ENCODE measurements at regions of chr13 and their contacts with region 1.

Region 1: GRCh38 chr13:35643625-35644024 is 167.1 kb upstream of the MAB21L1 start:
- DNase-seq: no peak
- H3K4me3 ChIP-seq: no peak overlapping the region
- H3K27ac ChIP-seq: no peak overlapping the region
- H3K4me1 ChIP-seq: no peaks in the 10 kb centered on the region
- H3K27me3 ChIP-seq: no peaks in the 10 kb centered on the region
- CTCF ChIP-seq: no peak

Region 2: GRCh38 chr13:35573639-35574038 is 70.0 kb before region 1 on chr13:
- CTCF ChIA-PET with region 1: no interaction called
- POLR2A ChIA-PET with region 1: no interaction called
- intact Hi-C with region 1: no loop called
- DNase-seq: no peak
- H3K4me3 ChIP-seq: no peak overlapping the region
- H3K27ac ChIP-seq: no peak overlapping the region
- H3K4me1 ChIP-seq: no peaks in the 10 kb centered on the region
- H3K27me3 ChIP-seq: no peaks in the 10 kb centered on the region
- CTCF ChIP-seq: no peak

Region 3: DNA sequence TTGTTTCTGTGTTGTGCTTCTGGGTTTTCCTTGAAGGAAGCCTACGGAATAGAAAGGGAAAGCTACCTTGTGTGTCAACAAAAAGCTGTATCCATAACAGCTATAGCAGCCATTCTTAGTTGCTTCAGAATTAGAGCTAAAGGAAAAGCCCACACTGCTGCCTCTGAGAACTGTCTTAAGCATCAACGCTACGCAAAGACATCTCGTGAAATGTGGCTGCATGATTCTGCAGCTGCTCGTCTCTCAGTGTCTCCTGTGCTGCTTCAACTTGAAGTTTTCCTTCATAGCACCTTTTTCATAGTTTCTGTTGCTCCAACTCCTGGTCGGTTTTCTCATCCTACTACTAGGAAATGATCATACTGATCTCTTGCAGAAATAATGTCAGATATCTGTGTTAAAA is 26.2 kb before region 1 on chr13:
- CTCF ChIA-PET with region 1: no interaction called
- POLR2A ChIA-PET with region 1: no interaction called
- intact Hi-C with region 1: no loop called
- DNase-seq: no peak
- H3K4me3 ChIP-seq: no peak overlapping the region
- H3K27ac ChIP-seq: no peak overlapping the region
- H3K4me1 ChIP-seq: no peaks in the 10 kb centered on the region
- H3K27me3 ChIP-seq: no peaks in the 10 kb centered on the region
- CTCF ChIP-seq: no peak

Region 4: GRCh38 chr13:35630551-35631275 is 12.9 kb before region 1 on chr13:
- CTCF ChIA-PET with region 1: interaction called, 14 read pairs
- POLR2A ChIA-PET with region 1: no interaction called
- intact Hi-C with region 1: no loop called
- DNase-seq: peak in 1 of 2 experiments; percentile 55
- H3K4me3 ChIP-seq: no peak overlapping the region
- H3K27ac ChIP-seq: no peak overlapping the region
- H3K4me1 ChIP-seq: no peaks in the 10 kb centered on the region
- H3K27me3 ChIP-seq: no peaks in the 10 kb centered on the region
- CTCF ChIP-seq: peak; percentile 85

Region 5: GRCh38 chr13:35855531-35856019 is 211.9 kb after region 1 on chr13:
- CTCF ChIA-PET with region 1: no interaction called
- POLR2A ChIA-PET with region 1: interaction called, 10 read pairs
- intact Hi-C with region 1: no loop called
- DNase-seq: peak; percentile 76 to 94
- H3K4me3 ChIP-seq: peak overlapping the region; percentile 32; the same call in 1 of the 2 replicates
- H3K27ac ChIP-seq: peak overlapping the region; percentile 61
- H3K4me1 ChIP-seq: peaks cover 24% of the 10 kb centered on the region
- H3K27me3 ChIP-seq: no peaks in the 10 kb centered on the region
- CTCF ChIP-seq: no peak

Measured in PC-9 (cell line).